Astrocyte of the cerebellum (primary cell): ENCODE measurements at regions of chr4 and their contacts with region 1.

Region 1: GRCh38 chr4:150010525-150011126 is 67.6 kb upstream of the DCLK2 start:
- DNase-seq: peak; percentile 68
- H3K4me3 ChIP-seq: no peak overlapping the region
- CTCF ChIP-seq: peak; percentile 53

Region 2: DNA sequence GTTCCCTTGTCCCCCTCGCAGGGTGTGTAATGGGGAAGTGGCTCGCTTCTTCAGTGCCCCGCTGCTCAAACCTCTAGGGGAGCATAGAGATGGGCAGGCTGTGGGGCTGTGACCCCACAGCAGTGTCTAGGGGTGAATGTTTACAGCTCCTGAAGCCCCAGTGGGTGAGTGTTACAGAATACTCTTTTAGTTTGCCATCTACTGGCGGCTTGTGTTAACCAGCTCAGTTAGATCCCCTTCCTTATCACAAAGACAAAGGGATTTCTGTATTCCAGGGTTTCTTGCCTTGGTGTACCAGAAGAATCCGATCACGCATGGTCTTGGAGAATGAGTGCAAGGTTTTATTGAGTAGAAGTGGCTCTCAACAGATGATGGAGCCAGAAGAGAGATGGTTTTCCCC is 86.9 kb before region 1 on chr4:
- in situ Hi-C with region 1: no loop called
- DNase-seq: no peak
- H3K4me3 ChIP-seq: no peak overlapping the region
- CTCF ChIP-seq: no peak

Region 3: DNA sequence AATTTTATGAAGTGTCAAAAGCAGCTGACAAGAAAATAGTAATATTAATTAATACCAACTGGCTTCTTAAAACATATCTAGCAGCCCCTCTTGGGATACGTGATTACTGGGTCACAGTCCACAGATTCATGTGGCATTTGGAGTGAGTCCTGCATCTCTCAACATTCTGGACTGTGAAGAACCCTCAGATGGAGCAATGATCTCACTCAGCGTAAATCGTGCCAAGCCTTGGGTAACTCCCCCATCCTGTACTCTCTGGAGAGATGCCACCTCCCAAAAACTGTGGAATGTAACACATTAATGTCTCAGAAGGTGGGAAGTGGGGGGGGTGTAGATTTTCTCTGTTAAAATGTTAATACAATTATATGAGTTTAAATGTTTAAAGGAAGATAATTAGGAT is 76.7 kb before region 1 on chr4:
- in situ Hi-C with region 1: no loop called
- DNase-seq: peak; percentile 6
- H3K4me3 ChIP-seq: no peak overlapping the region
- CTCF ChIP-seq: no peak

Region 4: GRCh38 chr4:149951152-149951900 is 59.3 kb before region 1 on chr4:
- in situ Hi-C with region 1: no loop called
- DNase-seq: no peak
- H3K4me3 ChIP-seq: no peak overlapping the region
- CTCF ChIP-seq: no peak

Region 5: GRCh38 chr4:150217192-150217591 is 206.6 kb after region 1 on chr4:
- in situ Hi-C with region 1: loop called (anchors 10 kb)
- DNase-seq: peak; percentile 81
- H3K4me3 ChIP-seq: no peak overlapping the region
- CTCF ChIP-seq: peak; percentile 68